ENCODE measurements at regions of chr7 and their contacts with region 1.

Region 1: DNA sequence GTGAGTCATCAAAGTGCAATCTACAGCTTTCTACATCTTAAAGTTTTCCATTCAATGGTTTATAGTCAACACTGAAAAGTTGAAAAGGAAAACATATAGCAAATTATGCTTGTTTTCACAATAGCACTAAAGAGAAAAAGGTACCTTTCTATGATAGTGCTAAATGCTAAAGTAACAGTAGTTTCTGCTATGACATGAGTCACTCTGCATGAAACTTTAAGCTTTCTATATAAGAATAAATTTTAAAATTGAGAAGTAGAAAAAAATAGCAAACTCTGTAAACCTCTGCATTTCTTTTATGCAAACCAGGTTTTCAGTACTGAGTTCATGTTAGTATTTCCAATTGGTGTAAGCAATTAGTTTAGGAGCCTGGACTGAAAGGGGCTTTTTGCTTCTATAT is 31.2 kb upstream of the TMEM168 start:
- DNase-seq: no peak
- H3K4me3 Mint-ChIP-seq: no peak overlapping the region
- H3K27ac Mint-ChIP-seq: no peak overlapping the region
- H3K4me1 Mint-ChIP-seq: peaks cover 2% of the 10 kb centered on the region
- H3K27me3 Mint-ChIP-seq: no peaks in the 10 kb centered on the region

Region 2: GRCh38 chr7:112798274-112799159 is 22.8 kb before region 1 on chr7:
- intact Hi-C with region 1: loop called (anchors 1 kb)
- DNase-seq: no peak
- H3K4me3 Mint-ChIP-seq: no peak overlapping the region
- H3K27ac Mint-ChIP-seq: no peak overlapping the region
- H3K4me1 Mint-ChIP-seq: peaks cover 1% of the 10 kb centered on the region
- H3K27me3 Mint-ChIP-seq: no peaks in the 10 kb centered on the region

Measured in activated T-helper 2 cell treated with anti-CD3 and anti-CD28 coated beads, Interferon-gamma antibody, Interleukin-2, Interleukin-4, amounts not matched to agents 10 μg/mL and 5 μg/mL and 100 μg/mL, durations not matched to agents 14 hours and 24 hours and 36 hours (primary cell).